ENCODE measurements at regions of chr9 and their contacts with region 1.

Region 1: DNA sequence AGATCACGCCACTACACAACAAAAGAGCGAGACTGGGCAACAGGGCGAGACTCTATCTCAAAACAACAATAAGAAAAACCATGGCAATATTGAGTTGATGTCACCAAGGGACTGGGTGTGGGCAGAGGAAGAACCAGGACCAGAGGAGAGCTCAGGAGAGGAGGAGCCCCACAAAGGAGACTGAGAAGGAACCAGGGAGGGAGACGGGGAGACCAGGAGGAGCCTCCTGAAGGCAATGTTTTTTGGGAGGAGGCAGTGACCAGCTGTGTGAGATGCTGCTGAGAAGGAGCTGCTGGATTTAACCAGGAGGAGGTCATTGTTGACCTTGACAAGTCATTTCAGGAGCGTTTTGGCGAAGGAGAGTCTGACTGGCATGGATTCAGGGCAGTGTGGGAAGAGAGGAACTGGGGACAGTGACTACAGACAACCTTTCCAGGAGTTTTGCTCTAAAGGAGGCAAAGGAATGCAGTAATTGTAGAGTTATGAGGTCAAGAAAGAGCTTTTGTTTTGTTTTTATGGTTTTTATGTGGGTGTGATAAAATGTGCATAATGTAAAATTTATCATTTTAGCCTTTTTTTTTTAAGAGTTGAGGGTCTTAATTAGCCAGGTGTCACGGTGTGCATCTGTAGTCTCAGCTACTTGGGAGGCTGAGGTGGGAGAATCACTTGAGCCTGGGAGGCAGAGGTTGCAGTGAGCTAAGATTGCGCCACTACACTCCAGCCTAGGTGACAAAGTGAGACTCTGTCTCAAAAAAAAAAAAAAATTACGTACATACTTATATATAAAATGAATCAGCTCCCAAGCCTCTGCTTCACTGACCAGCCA is 17.9 kb downstream of the TRUB2 start:
- DNase-seq: peak; percentile 28
- H3K4me3 Mint-ChIP-seq: no peak overlapping the region
- H3K27ac Mint-ChIP-seq: peak overlapping the region; percentile 90
- H3K4me1 Mint-ChIP-seq: peaks cover 15% of the 10 kb centered on the region
- H3K27me3 Mint-ChIP-seq: no peaks in the 10 kb centered on the region
- CTCF ChIP-seq: no peak

Region 2: GRCh38 chr9:128528445-128529160 is 224.2 kb after region 1 on chr9:
- CTCF ChIA-PET with region 1: no interaction called
- POLR2A ChIA-PET with region 1: no interaction called
- intact Hi-C with region 1: no loop called
- DNase-seq: no peak
- H3K4me3 Mint-ChIP-seq: no peak overlapping the region
- H3K27ac Mint-ChIP-seq: peak overlapping the region; percentile 74
- H3K4me1 Mint-ChIP-seq: no peaks in the 10 kb centered on the region
- H3K27me3 Mint-ChIP-seq: no peaks in the 10 kb centered on the region
- CTCF ChIP-seq: no peak

Region 3: GRCh38 chr9:129802851-129803675 is 1498.7 kb after region 1 on chr9 and contains the start of gene TOR1B:
- CTCF ChIA-PET with region 1: no interaction called
- POLR2A ChIA-PET with region 1: interaction called, 10 read pairs
- intact Hi-C with region 1: no loop called
- DNase-seq: peak; percentile 89
- H3K4me3 Mint-ChIP-seq: peak within 1 kb of the TSS; percentile 82
- H3K27ac Mint-ChIP-seq: peak within 1 kb of the TSS; percentile 90
- H3K4me1 Mint-ChIP-seq: no peaks in the 10 kb centered on the region
- H3K27me3 Mint-ChIP-seq: no peaks in the 10 kb centered on the region
- CTCF ChIP-seq: no peak
- total RNA-seq, gene TOR1B: 14.7 and 14.8 TPM in 2 replicates